GM12878 (cell line): ENCODE measurements at regions of chr1 and their contacts with region 1.

Region 1: DNA sequence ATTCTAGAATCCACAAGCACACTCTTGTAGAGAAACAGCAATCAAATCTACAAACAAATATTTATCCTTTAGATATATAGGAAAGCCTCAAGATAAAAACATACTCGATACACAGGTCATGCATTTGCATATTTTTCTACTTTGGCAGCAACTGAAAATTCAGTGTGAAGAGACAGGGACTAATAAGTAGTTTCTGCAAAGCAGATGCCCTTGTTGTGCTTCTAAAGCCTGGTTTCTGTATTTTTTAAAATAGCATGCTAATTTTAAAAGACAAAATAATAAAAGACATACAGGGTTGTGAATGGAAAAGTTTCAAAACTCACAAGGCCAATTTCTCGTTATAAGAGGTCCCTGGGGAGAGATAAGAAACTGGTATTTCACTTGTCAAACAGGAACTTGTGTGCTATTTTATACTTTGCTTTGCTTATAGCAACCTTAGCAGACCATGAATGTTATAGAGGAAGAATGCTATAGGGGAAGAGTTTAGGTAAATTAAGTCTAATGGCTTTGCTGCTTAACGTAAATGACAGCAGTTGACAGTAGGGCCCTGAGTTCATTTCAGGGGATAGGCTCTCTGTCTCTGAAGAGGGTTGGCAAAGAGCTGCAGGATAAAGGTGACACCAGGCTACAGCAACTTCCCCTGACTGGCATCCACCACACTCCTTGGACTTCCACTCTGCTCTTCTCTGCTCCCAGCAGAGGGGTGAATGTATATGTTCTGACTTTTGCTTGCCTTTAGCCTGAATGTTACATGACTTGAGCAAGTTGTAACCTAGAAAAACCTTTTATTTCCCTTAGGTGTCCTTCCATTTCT is 9.4 kb upstream of the RGS13 start:
- DNase-seq: peak; percentile 66
- ATAC-seq: peak; percentile 84
- H3K4me3 ChIP-seq: no peak overlapping the region
- H3K27ac ChIP-seq: no peak overlapping the region
- H3K4me1 ChIP-seq: no peaks in the 10 kb centered on the region
- H3K27me3 ChIP-seq: no peaks in the 10 kb centered on the region
- CTCF ChIP-seq: no peak
- EP300 ChIP-seq: peak in 1 of 2 experiments; percentile 67; a peak in 1 of 4 replicates
- POLR2A ChIP-seq: no peak
- RAD21 ChIP-seq: no peak

Region 2: GRCh38 chr1:192559115-192560006 is 67.2 kb before region 1 on chr1:
- CTCF ChIA-PET with region 1: no interaction called
- POLR2A ChIA-PET with region 1: no interaction called
- RAD21 ChIA-PET with region 1: no interaction called
- SMC1A ChIA-PET with region 1: no interaction called
- in situ Hi-C with region 1: no loop called
- intact Hi-C with region 1: no loop called
- DNase-seq: no peak
- ATAC-seq: peak; percentile 54
- H3K4me3 ChIP-seq: peak overlapping the region; percentile 23; the same call in 1 of the 2 replicates
- H3K27ac ChIP-seq: peak overlapping the region; percentile 79
- H3K4me1 ChIP-seq: peaks cover 3% of the 10 kb centered on the region; the same call in 1 of the 2 replicates
- H3K27me3 ChIP-seq: no peaks in the 10 kb centered on the region
- CTCF ChIP-seq: no peak
- EP300 ChIP-seq: peak; percentile 93 to 99
- POLR2A ChIP-seq: no peak
- RAD21 ChIP-seq: peak; percentile 14; the same call in 1 of the 2 replicates

Region 3: DNA sequence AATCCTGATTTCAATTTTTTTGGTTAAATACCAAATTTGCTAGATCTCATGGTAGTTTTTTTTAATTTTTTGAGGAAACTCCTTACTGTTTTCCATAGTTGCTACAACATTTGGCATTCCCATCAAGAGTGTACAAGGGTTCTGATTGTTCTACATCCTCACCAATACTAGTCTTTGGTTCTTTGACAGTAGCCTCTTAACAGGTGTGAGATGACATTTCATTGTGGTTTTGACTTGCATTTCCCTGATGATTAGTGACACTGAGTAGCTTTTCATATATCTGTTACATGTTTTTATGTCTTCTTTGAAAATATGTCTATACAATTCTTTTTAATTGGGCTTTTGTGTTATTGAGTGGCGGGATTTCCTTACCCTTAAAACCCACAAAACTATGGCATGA is 11.5 kb before region 1 on chr1:
- CTCF ChIA-PET with region 1: interaction called, 28 read pairs
- POLR2A ChIA-PET with region 1: no interaction called
- RAD21 ChIA-PET with region 1: interaction called, 8 read pairs
- SMC1A ChIA-PET with region 1: interaction called, 18 read pairs
- in situ Hi-C with region 1: no loop called
- intact Hi-C with region 1: loop called (anchors 2 kb)
- DNase-seq: no peak
- ATAC-seq: peak; percentile 74
- H3K4me3 ChIP-seq: no peak overlapping the region
- H3K27ac ChIP-seq: no peak overlapping the region
- H3K4me1 ChIP-seq: no peaks in the 10 kb centered on the region
- H3K27me3 ChIP-seq: no peaks in the 10 kb centered on the region; a peak in 2 of 4 replicates
- CTCF ChIP-seq: no peak
- EP300 ChIP-seq: no peak
- POLR2A ChIP-seq: no peak
- RAD21 ChIP-seq: no peak

Region 4: GRCh38 chr1:192639607-192640368 is 13.2 kb after region 1 on chr1:
- CTCF ChIA-PET with region 1: interaction called, 10 read pairs
- POLR2A ChIA-PET with region 1: interaction called, 3 read pairs
- RAD21 ChIA-PET with region 1: interaction called, 6 read pairs
- SMC1A ChIA-PET with region 1: interaction called, 9 read pairs
- in situ Hi-C with region 1: no loop called
- intact Hi-C with region 1: no loop called
- DNase-seq: peak; percentile 51
- ATAC-seq: peak; percentile 83
- H3K4me3 ChIP-seq: no peak overlapping the region
- H3K27ac ChIP-seq: no peak overlapping the region
- H3K4me1 ChIP-seq: peaks cover 8% of the 10 kb centered on the region
- H3K27me3 ChIP-seq: no peaks in the 10 kb centered on the region; a peak in 2 of 4 replicates
- CTCF ChIP-seq: no peak
- EP300 ChIP-seq: 0 out of 4 replicates have a peak, but pooled peaks of 1 of the 2 experiments have one; percentile 8
- POLR2A ChIP-seq: no peak
- RAD21 ChIP-seq: no peak